ENCODE measurements at regions of chr3 and their contacts with region 1.

Region 1: GRCh38 chr3:102229062-102229655 is 205.7 kb upstream of the ZPLD1 start:
- DNase-seq: peak; percentile 84
- ATAC-seq: peak; percentile 86
- H3K4me3 Mint-ChIP-seq: no peak overlapping the region
- H3K27ac Mint-ChIP-seq: no peak overlapping the region
- H3K4me1 Mint-ChIP-seq: peaks cover 9% of the 10 kb centered on the region
- H3K27me3 Mint-ChIP-seq: no peaks in the 10 kb centered on the region
- CTCF ChIP-seq: peak; percentile 86

Region 2: DNA sequence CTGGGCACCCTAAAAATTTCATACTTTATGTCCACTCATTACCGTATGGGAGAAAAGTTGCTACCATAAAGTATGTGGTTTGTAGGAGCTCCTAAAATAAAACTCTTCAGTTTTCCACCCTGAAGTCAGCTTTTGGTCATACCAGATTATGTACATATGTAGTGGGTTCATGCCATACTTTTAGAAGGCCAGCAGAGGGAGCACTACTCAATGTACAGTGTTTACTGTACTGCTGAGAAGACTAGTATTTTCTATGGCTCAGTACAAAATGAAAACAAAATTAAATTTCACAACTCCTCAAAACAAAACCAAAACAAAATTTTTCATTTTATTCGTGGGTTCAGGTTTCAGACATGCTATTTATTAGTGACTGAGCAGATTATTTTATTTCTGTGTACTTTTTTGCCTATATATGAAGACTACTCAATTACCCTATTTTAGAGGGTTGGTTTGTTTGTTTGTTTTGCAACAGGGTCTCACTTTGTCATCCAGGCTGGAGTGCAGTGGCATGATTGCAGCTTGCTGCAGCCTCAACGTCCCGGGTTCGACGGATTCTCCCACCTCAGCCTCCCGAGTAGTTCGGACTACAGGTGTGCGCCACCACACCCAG is 425.9 kb before region 1 on chr3:
- CTCF ChIA-PET with region 1: interaction called, 302 read pairs
- POLR2A ChIA-PET with region 1: no interaction called
- intact Hi-C with region 1: no loop called
- DNase-seq: peak; percentile 68
- ATAC-seq: peak; percentile 99
- H3K4me3 Mint-ChIP-seq: no peak overlapping the region
- H3K27ac Mint-ChIP-seq: no peak overlapping the region
- H3K4me1 Mint-ChIP-seq: peaks cover 35% of the 10 kb centered on the region
- H3K27me3 Mint-ChIP-seq: no peaks in the 10 kb centered on the region
- CTCF ChIP-seq: peak; percentile 88

Region 3: GRCh38 chr3:101819758-101820157 is 409.4 kb before region 1 on chr3:
- CTCF ChIA-PET with region 1: interaction called, 302 read pairs
- POLR2A ChIA-PET with region 1: no interaction called
- intact Hi-C with region 1: no loop called
- DNase-seq: no peak
- ATAC-seq: peak; percentile 66
- H3K4me3 Mint-ChIP-seq: no peak overlapping the region
- H3K27ac Mint-ChIP-seq: peak overlapping the region; percentile 63
- H3K4me1 Mint-ChIP-seq: peaks cover 51% of the 10 kb centered on the region
- H3K27me3 Mint-ChIP-seq: no peaks in the 10 kb centered on the region
- CTCF ChIP-seq: no peak

Region 4: GRCh38 chr3:102481050-102481449 is 251.9 kb after region 1 on chr3:
- CTCF ChIA-PET with region 1: no interaction called
- POLR2A ChIA-PET with region 1: no interaction called
- intact Hi-C with region 1: no loop called
- DNase-seq: no peak
- ATAC-seq: no peak
- H3K4me3 Mint-ChIP-seq: no peak overlapping the region
- H3K27ac Mint-ChIP-seq: no peak overlapping the region
- H3K4me1 Mint-ChIP-seq: no peaks in the 10 kb centered on the region
- H3K27me3 Mint-ChIP-seq: no peaks in the 10 kb centered on the region
- CTCF ChIP-seq: no peak

Region 5: GRCh38 chr3:102525624-102526023 is 296.5 kb after region 1 on chr3:
- CTCF ChIA-PET with region 1: interaction called, 23 read pairs
- POLR2A ChIA-PET with region 1: no interaction called
- intact Hi-C with region 1: no loop called
- DNase-seq: no peak
- ATAC-seq: no peak
- H3K4me3 Mint-ChIP-seq: no peak overlapping the region
- H3K27ac Mint-ChIP-seq: no peak overlapping the region
- H3K4me1 Mint-ChIP-seq: no peaks in the 10 kb centered on the region
- H3K27me3 Mint-ChIP-seq: peaks cover 9% of the 10 kb centered on the region
- CTCF ChIP-seq: no peak

Region 6: GRCh38 chr3:102544741-102545140 is 315.6 kb after region 1 on chr3:
- CTCF ChIA-PET with region 1: interaction called, 92 read pairs
- POLR2A ChIA-PET with region 1: no interaction called
- intact Hi-C with region 1: no loop called
- DNase-seq: no peak
- ATAC-seq: no peak
- H3K4me3 Mint-ChIP-seq: no peak overlapping the region
- H3K27ac Mint-ChIP-seq: no peak overlapping the region
- H3K4me1 Mint-ChIP-seq: no peaks in the 10 kb centered on the region
- H3K27me3 Mint-ChIP-seq: peaks cover 5% of the 10 kb centered on the region
- CTCF ChIP-seq: no peak

Region 7: DNA sequence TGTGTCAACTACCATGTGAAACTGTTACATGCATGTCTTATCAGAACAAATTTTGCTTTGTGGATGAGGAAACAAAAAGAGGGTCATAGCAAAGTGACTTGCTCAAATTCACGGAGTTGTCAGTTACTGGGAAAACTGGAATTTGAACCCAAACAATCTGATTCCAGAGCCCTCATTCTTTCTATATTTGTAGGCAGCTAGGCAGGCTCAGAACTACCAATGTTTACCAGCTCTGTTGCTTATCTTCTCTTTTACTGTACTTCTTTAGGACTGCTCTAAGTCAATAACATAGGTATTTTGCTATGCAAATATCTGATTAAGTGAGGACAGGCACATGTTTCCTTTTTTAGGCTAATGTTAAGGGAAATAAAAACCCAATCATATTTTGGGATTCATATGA is 656.1 kb after region 1 on chr3:
- CTCF ChIA-PET with region 1: no interaction called
- POLR2A ChIA-PET with region 1: no interaction called
- intact Hi-C with region 1: no loop called
- DNase-seq: no peak
- ATAC-seq: no peak
- H3K4me3 Mint-ChIP-seq: no peak overlapping the region
- H3K27ac Mint-ChIP-seq: no peak overlapping the region
- H3K4me1 Mint-ChIP-seq: no peaks in the 10 kb centered on the region
- H3K27me3 Mint-ChIP-seq: no peaks in the 10 kb centered on the region
- CTCF ChIP-seq: no peak

Measured in activated CD8-positive, alpha-beta T cell treated with anti-CD3 and anti-CD28 coated beads for 36 hours (primary cell).